ENCODE measurements at regions of chr7 and their contacts with region 1.

Region 1: GRCh38 chr7:99143853-99144672 is at the start of gene SMURF1:
- DNase-seq: peak; percentile 50 to 89 (median 80)
- ATAC-seq: peak; percentile 84
- H3K4me3 ChIP-seq: peak within 1 kb of the TSS; percentile 94
- H3K4me3 Mint-ChIP-seq: peak within 1 kb of the TSS; percentile 93 to 99 (median 96)
- H3K27ac ChIP-seq: peak within 1 kb of the TSS; percentile 90
- H3K27ac Mint-ChIP-seq: peak within 1 kb of the TSS; percentile 88 to 98 (median 96)
- H3K4me1 ChIP-seq: peaks cover 5 to 14% of the 10 kb centered on the region in 2 donors
- H3K4me1 Mint-ChIP-seq: peaks cover 30 to 49% (median 39%) of the 10 kb centered on the region in 7 donors
- H3K27me3 ChIP-seq: no peaks in the 10 kb centered on the region
- H3K27me3 Mint-ChIP-seq: peaks cover 0 to 7% (median 5%) of the 10 kb centered on the region in 5 donors
- total RNA-seq, gene SMURF1: 14.6 to 26.4 (median 20.8) TPM

Region 2: DNA sequence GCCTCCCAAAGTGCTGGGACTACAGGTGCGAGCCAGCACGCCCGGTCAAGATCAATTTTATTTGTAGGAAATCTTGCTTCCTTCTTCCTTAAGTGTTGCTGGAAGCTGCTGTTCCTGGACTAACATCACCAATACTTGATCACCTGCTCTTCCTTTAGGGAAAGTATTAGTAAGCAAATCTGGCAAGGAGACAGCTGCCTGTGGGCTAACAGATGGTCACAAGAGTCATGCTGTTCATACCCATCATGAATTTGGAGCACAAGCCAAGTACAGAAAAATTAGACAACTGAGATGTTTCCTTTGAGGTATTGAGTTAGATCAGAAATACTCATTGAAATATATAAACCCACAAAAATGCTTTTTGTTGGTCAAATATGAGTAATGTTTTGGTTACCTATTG is 771.1 kb before region 1 on chr7:
- CTCF ChIA-PET with region 1: no interaction called
- POLR2A ChIA-PET with region 1: no interaction called
- intact Hi-C with region 1: no loop called
- DNase-seq: no peak
- ATAC-seq: no peak
- H3K4me3 ChIP-seq: no peak overlapping the region
- H3K4me3 Mint-ChIP-seq: no peak overlapping the region
- H3K27ac ChIP-seq: no peak overlapping the region
- H3K27ac Mint-ChIP-seq: no peak overlapping the region
- H3K4me1 ChIP-seq: no peaks in the 10 kb centered on the region
- H3K4me1 Mint-ChIP-seq: no peaks in the 10 kb centered on the region
- H3K27me3 ChIP-seq: no peaks in the 10 kb centered on the region
- H3K27me3 Mint-ChIP-seq: no peaks in the 10 kb centered on the region

Region 3: DNA sequence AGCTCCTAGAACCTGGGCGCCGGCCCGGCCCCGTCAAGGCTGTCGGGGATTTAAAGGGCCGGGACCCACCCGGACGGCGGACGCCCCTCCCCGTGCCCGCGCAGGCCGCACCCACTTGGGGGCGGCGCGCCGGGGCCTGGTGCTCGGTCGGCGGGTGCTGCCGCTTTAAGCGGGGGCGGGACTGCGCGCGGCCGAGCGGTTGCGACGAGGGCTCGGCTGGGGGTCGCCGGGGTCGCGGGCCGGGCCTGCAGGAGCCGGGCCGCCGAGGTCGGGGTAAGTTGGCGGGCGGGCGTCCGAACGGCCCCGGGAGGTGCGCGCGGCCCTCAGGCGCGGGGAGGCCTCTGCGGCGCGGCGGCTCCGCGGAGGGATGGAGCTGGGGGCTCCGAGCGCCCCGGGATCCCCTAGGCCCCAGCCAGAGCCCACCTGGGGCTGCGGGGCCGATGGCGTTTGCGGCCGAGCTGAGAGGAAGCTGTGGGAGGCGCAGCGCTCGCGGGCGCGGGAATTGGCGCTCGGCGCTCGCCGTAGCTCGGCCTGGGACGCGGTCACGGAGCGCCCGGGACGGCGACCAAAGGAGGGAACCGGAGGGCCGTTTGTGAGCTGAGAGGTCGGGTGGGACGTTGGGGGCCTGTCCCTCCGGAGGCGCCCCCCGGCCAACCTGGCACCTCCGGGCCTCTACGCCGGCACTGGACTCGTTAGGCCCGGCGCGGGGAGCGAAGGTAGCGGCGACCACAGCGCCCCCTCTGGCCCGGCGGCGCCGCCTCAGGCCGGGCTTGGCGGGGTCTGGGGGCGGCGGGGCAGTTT is 265.5 kb before region 1 on chr7 and contains the start of gene TRRAP:
- CTCF ChIA-PET with region 1: no interaction called
- POLR2A ChIA-PET with region 1: no interaction called
- intact Hi-C with region 1: loop called (anchors 1 to 2 kb)
- DNase-seq: peak; percentile 63 to 87 (median 82)
- ATAC-seq: peak; percentile 82
- H3K4me3 ChIP-seq: peak within 1 kb of the TSS; percentile 95
- H3K4me3 Mint-ChIP-seq: peak within 1 kb of the TSS; percentile 90 to 99 (median 95)
- H3K27ac ChIP-seq: peak within 1 kb of the TSS; percentile 88
- H3K27ac Mint-ChIP-seq: peak within 1 kb of the TSS; percentile 87 to 98 (median 94)
- H3K4me1 ChIP-seq: peaks cover 9 to 14% of the 10 kb centered on the region in 2 donors
- H3K4me1 Mint-ChIP-seq: peaks cover 0 to 37% (median 26%) of the 10 kb centered on the region in 7 donors
- H3K27me3 ChIP-seq: no peaks in the 10 kb centered on the region
- H3K27me3 Mint-ChIP-seq: peaks cover 0 to 3% (median 0%) of the 10 kb centered on the region in 5 donors
- total RNA-seq, gene TRRAP: 59.1 to 72.3 (median 66.8) TPM

Region 4: DNA sequence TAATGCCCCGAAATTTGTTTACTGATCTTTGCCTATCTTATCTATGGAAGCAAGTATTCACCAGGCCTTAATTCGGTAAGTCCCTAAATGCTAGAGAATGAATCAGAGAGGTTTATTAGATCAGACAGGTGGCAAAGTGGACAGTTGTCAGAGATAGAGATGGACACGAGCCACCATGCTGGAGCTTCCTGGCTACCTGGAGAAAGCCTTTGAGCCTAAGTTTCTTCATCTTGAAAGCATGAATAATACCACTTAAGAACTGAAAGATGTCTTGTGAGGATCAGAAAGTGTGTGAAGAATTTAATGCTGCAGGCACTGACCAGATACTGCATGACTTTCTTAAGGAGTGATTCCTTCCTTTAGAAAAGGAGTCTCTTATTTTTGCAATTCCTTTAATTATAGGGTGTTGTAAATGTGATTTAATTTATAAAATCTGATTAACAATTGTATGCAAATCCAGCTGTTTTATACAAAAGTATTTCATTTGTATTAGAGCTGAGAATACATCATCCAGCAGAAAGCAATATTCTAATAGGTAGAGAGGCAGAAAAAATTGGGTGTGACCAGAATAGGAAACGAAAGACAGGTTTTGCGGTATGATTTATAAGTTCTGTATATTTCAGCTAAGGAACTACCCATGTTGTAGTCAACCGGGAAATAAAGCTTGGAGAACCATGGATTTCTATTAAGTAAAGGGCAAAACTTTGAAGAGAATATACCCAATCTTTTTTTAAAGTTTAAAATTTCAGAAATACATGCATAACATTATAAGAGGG is 82.9 kb before region 1 on chr7:
- CTCF ChIA-PET with region 1: no interaction called
- POLR2A ChIA-PET with region 1: interaction called, 3 read pairs
- intact Hi-C with region 1: loop called in 1 of 2 experiments (anchors 5 kb)
- DNase-seq: no peak
- ATAC-seq: no peak
- H3K4me3 ChIP-seq: no peak overlapping the region
- H3K4me3 Mint-ChIP-seq: peak overlapping the region in 3 of 10 donors; percentile 15 to 39 (median 19)
- H3K27ac ChIP-seq: peak overlapping the region; percentile 1
- H3K27ac Mint-ChIP-seq: peak overlapping the region in 6 of 9 donors; percentile 8 to 68 (median 52)
- H3K4me1 ChIP-seq: no peaks in the 10 kb centered on the region
- H3K4me1 Mint-ChIP-seq: peaks cover 10 to 31% (median 24%) of the 10 kb centered on the region in 7 donors
- H3K27me3 ChIP-seq: no peaks in the 10 kb centered on the region
- H3K27me3 Mint-ChIP-seq: no peaks in the 10 kb centered on the region

Region 5: GRCh38 chr7:99312316-99313203 is 168.5 kb after region 1 on chr7:
- CTCF ChIA-PET with region 1: no interaction called
- POLR2A ChIA-PET with region 1: no interaction called
- intact Hi-C with region 1: loop called (anchors 1 to 2 kb)
- DNase-seq: peak; percentile 41 to 75 (median 61)
- ATAC-seq: peak; percentile 93
- H3K4me3 ChIP-seq: no peak overlapping the region
- H3K4me3 Mint-ChIP-seq: peak overlapping the region in 4 of 10 donors; percentile 20 to 71 (median 54)
- H3K27ac ChIP-seq: no peak overlapping the region
- H3K27ac Mint-ChIP-seq: peak overlapping the region in 1 of 9 donors; percentile 15
- H3K4me1 ChIP-seq: peaks cover 0 to 3% of the 10 kb centered on the region in 2 donors
- H3K4me1 Mint-ChIP-seq: peaks cover 4 to 20% (median 4%) of the 10 kb centered on the region in 7 donors
- H3K27me3 ChIP-seq: no peaks in the 10 kb centered on the region
- H3K27me3 Mint-ChIP-seq: peaks cover 0 to 3% (median 0%) of the 10 kb centered on the region in 5 donors

Region 6: DNA sequence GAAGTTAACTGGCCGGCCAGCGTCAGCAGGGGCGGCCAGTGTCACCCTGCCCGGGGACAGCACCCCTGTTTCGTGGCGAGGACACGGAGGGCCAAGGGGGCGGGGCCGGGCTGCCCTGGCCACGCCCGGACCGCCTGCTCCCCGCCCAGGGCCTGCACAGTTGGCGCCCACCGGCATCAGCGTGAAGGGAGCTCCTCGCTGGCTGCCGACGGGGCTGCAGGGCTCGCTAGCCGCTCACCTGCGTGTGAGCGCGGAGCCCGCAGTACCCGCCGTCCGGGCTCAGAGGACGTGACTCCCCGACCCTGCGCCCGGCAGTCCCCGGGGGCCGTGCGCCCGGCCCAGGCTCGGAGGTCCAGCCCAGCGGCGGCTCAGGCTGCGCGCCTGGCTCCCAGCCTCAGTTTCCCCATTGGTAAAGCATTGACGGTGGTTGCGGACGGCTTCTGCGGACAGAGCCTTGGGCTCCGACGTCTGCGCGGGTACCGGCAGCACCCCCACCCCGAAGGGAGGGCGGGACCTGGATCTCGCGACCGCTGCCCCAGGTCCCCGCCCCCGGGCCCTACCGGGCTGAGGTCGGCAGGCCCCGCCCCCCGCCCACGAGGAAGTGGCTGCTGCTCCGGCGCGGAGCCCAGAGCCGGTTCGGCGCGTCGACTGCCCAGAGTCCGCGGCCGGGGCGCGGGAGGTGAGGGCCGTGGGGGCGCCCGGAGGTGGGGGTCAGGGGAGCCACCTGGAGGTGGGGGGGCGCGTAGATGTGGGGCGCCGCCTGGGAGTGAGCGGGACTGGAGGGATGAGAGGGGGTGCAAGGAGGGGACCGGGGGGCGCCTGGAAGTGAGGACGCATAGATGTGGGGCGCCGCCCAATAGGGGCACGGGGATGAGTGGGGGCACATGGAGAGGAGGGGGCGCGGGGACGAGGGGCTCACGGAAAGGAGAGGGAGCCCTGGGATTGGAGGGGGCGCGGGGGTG is 230.3 kb after region 1 on chr7 and contains the start of gene ARPC1B:
- CTCF ChIA-PET with region 1: no interaction called
- POLR2A ChIA-PET with region 1: no interaction called
- intact Hi-C with region 1: loop called in 1 of 2 experiments (anchors 2 kb)
- DNase-seq: peak; percentile 67 to 86 (median 76)
- ATAC-seq: peak; percentile 82
- H3K4me3 ChIP-seq: peak within 1 kb of the TSS; percentile 83
- H3K4me3 Mint-ChIP-seq: peak within 1 kb of the TSS; percentile 71 to 90 (median 82)
- H3K27ac ChIP-seq: peak within 1 kb of the TSS; percentile 95
- H3K27ac Mint-ChIP-seq: peak within 1 kb of the TSS; percentile 76 to 99 (median 94)
- H3K4me1 ChIP-seq: peaks cover 18 to 35% of the 10 kb centered on the region in 2 donors
- H3K4me1 Mint-ChIP-seq: peaks cover 6 to 36% (median 32%) of the 10 kb centered on the region in 7 donors
- H3K27me3 ChIP-seq: no peaks in the 10 kb centered on the region
- H3K27me3 Mint-ChIP-seq: no peaks in the 10 kb centered on the region
- total RNA-seq, gene ARPC1B: 88.1 to 364 (median 141) TPM

Region 7: GRCh38 chr7:99472561-99473243 is 328.6 kb after region 1 on chr7 and contains the start of gene ZNF789:
- CTCF ChIA-PET with region 1: no interaction called
- POLR2A ChIA-PET with region 1: no interaction called
- intact Hi-C with region 1: loop called in 1 of 2 experiments (anchors 5 kb)
- DNase-seq: peak; percentile 90 to 98 (median 95)
- ATAC-seq: peak; percentile 99
- H3K4me3 ChIP-seq: peak within 1 kb of the TSS; percentile 86
- H3K4me3 Mint-ChIP-seq: peak within 1 kb of the TSS; percentile 94 to 99 (median 98)
- H3K27ac ChIP-seq: peak within 1 kb of the TSS; percentile 82
- H3K27ac Mint-ChIP-seq: peak within 1 kb of the TSS; percentile 87 to 98 (median 95)
- H3K4me1 ChIP-seq: peaks cover 8 to 15% of the 10 kb centered on the region in 2 donors
- H3K4me1 Mint-ChIP-seq: peaks cover 23 to 48% (median 35%) of the 10 kb centered on the region in 7 donors
- H3K27me3 ChIP-seq: no peaks in the 10 kb centered on the region
- H3K27me3 Mint-ChIP-seq: peaks cover 0 to 5% (median 0%) of the 10 kb centered on the region in 5 donors
- total RNA-seq, gene ZNF789: 17.4 to 28.0 (median 27.3) TPM

Region 8: DNA sequence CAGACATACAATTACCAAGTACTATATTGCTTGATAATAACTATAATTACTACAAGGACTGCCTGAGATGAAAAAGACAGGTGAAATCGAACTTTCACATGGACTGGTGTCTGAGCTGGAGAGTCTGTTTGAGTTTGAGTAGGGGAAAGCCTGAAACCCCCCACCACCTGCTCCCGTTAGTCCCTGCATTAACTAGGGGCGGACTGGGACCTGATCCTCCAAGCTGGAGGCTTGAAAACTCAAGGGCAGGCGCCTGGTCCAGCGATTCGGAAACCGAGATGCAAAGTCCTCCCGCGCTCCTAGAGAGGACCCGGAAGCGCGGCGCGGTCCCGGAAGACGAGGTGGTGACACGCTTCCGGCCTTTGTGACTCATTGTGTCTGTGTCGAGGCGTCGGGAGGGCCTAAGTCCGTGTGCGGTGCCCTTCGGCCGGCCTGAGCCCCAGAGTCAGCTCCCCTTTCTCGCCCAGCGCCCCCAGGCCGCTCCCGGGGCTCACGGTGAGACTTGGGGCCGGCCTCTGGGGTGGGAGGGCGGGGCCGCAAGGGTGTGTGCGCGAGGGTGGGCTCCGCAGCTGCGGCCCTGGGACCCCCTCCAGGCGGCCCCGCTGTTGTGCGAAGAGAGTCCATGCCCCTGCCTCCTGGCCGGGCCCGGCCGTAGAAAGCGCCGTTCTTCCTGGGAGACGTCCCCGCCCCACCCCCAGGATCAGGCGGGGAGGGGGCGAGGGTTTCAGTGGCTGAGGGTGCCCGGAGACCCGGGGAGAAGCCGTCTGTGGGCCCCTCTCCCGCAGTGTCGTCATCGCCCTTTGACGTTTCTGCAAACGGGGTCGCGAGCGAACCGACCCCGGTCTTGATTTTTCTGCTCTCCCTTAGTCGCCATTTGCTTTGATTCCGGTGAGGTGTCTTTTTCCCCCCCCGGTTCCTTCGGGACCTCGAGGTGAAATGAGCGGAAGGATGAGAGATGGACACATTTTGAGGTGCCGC is 871.5 kb after region 1 on chr7 and contains the start of gene ZKSCAN1:
- CTCF ChIA-PET with region 1: no interaction called
- POLR2A ChIA-PET with region 1: no interaction called
- intact Hi-C with region 1: loop called in 1 of 2 experiments (anchors 10 kb)
- DNase-seq: peak; percentile 68 to 86 (median 81)
- ATAC-seq: peak; percentile 99
- H3K4me3 ChIP-seq: peak within 1 kb of the TSS; percentile 51
- H3K4me3 Mint-ChIP-seq: peak within 1 kb of the TSS; percentile 92 to 98 (median 96)
- H3K27ac ChIP-seq: peak within 1 kb of the TSS; percentile 98
- H3K27ac Mint-ChIP-seq: peak within 1 kb of the TSS; percentile 91 to 98 (median 97)
- H3K4me1 ChIP-seq: peaks cover 19 to 22% of the 10 kb centered on the region in 2 donors
- H3K4me1 Mint-ChIP-seq: peaks cover 23 to 57% (median 44%) of the 10 kb centered on the region in 7 donors
- H3K27me3 ChIP-seq: no peaks in the 10 kb centered on the region
- H3K27me3 Mint-ChIP-seq: peaks cover 0 to 3% (median 0%) of the 10 kb centered on the region in 5 donors
- total RNA-seq, gene ZKSCAN1: 54.0 to 103 (median 70.1) TPM